CD8-positive, alpha-beta T cell (primary cell): ENCODE measurements at regions of chr4 and their contacts with region 1.

Region 1: DNA sequence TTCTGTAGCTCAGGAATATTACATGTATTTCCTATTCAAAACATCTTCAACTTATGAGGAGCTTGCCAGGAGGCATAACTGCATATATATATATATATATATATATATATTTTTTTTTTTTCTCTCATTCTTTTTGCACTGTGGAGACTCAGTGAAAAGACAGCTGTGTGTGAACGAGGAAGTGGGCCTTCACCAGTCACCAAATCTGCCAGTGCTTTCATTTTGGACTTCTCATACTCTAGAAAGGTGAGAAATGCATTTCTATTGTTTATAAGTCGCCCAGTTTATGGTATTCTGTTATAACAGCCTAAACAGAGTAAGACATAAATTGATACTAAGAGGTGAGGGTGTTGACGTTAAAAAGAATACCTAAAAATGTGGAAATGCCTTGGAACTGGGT is 710.6 kb downstream of the TRAM1L1 start:
- DNase-seq: no peak
- ATAC-seq: no peak
- H3K4me3 ChIP-seq: no peak overlapping the region
- H3K4me3 Mint-ChIP-seq: no peak overlapping the region
- H3K27ac ChIP-seq: no peak overlapping the region
- H3K27ac Mint-ChIP-seq: no peak overlapping the region
- H3K4me1 ChIP-seq: no peaks in the 10 kb centered on the region
- H3K4me1 Mint-ChIP-seq: no peaks in the 10 kb centered on the region
- H3K27me3 ChIP-seq: no peaks in the 10 kb centered on the region
- H3K27me3 Mint-ChIP-seq: no peaks in the 10 kb centered on the region
- CTCF ChIP-seq: no peak

Region 2: DNA sequence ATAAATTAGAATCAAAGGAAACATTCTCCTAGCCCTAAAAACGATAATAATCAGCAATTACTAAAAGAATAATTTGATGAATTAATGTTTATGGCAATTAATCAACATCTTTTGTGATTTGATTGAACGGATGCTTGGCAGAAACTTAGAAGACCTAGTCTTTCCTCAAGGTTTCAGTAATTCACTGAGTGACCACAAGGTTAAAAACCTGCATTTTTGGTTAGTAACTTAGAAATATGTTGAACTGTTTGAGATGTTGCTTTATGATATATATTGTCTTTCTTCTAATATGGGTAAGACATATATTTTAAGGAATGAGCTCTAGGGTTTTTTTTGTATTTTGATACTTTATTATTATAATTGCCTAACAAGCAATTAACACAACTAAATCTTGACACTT is 468.4 kb before region 1 on chr4:
- CTCF ChIA-PET with region 1: no interaction called
- POLR2A ChIA-PET with region 1: no interaction called
- intact Hi-C with region 1: no loop called
- DNase-seq: no peak
- ATAC-seq: no peak
- H3K4me3 ChIP-seq: no peak overlapping the region
- H3K4me3 Mint-ChIP-seq: no peak overlapping the region
- H3K27ac ChIP-seq: no peak overlapping the region
- H3K27ac Mint-ChIP-seq: no peak overlapping the region
- H3K4me1 ChIP-seq: no peaks in the 10 kb centered on the region
- H3K4me1 Mint-ChIP-seq: no peaks in the 10 kb centered on the region
- H3K27me3 ChIP-seq: no peaks in the 10 kb centered on the region
- H3K27me3 Mint-ChIP-seq: no peaks in the 10 kb centered on the region
- CTCF ChIP-seq: no peak

Region 3: GRCh38 chr4:117740736-117741135 is 1365.9 kb after region 1 on chr4:
- CTCF ChIA-PET with region 1: no interaction called
- POLR2A ChIA-PET with region 1: no interaction called
- intact Hi-C with region 1: loop called in 1 of 2 experiments (anchors 5 kb)
- DNase-seq: no peak
- ATAC-seq: no peak
- H3K4me3 ChIP-seq: no peak overlapping the region
- H3K4me3 Mint-ChIP-seq: no peak overlapping the region
- H3K27ac ChIP-seq: no peak overlapping the region
- H3K27ac Mint-ChIP-seq: no peak overlapping the region
- H3K4me1 ChIP-seq: no peaks in the 10 kb centered on the region
- H3K4me1 Mint-ChIP-seq: no peaks in the 10 kb centered on the region
- H3K27me3 ChIP-seq: no peaks in the 10 kb centered on the region
- H3K27me3 Mint-ChIP-seq: no peaks in the 10 kb centered on the region
- CTCF ChIP-seq: no peak